Aorta (tissue), 5 donors: ENCODE measurements at regions of chr2 and their contacts with region 1.

Region 1: GRCh38 chr2:130332271-130333073 is 10.2 kb upstream of the IMP4 start:
- DNase-seq: peak; percentile 74 to 92
- ATAC-seq: peak; percentile 80
- H3K4me3 ChIP-seq: no peak overlapping the region
- H3K27ac ChIP-seq: no peak overlapping the region
- H3K4me1 ChIP-seq: no peaks in the 10 kb centered on the region
- H3K27me3 ChIP-seq: no peaks in the 10 kb centered on the region

Region 2: DNA sequence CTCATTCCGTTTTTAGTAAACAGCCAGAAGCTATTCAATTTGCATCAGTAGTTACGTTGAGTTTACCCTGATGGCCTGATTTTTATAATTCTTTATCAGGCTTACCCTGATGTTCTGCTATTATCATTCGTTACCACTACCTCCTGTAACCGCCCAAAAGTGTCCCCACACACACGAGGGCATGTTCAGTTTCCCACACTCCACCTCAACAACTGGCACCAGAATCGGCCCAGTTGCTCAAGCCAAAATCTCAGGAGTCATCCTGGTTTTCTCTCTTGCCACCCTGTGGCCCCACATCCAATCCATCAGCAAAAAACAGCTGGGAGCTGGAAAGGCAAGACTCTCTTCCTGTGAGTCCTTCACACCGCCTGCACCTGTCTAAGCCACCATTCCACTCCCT is 455.9 kb before region 1 on chr2:
- intact Hi-C with region 1: no loop called
- DNase-seq: no peak
- ATAC-seq: no peak
- H3K4me3 ChIP-seq: peak overlapping the region in 1 of 2 donors; percentile 30
- H3K27ac ChIP-seq: no peak overlapping the region
- H3K4me1 ChIP-seq: no peaks in the 10 kb centered on the region
- H3K27me3 ChIP-seq: no peaks in the 10 kb centered on the region

Region 3: GRCh38 chr2:129936334-129936934 is 396.0 kb before region 1 on chr2:
- intact Hi-C with region 1: loop called in 1 of 2 experiments (anchors 5 kb)
- DNase-seq: no peak
- ATAC-seq: no peak
- H3K4me3 ChIP-seq: no peak overlapping the region
- H3K27ac ChIP-seq: no peak overlapping the region
- H3K4me1 ChIP-seq: no peaks in the 10 kb centered on the region
- H3K27me3 ChIP-seq: no peaks in the 10 kb centered on the region

Region 4: GRCh38 chr2:130181325-130181879 is 151.1 kb before region 1 on chr2 and contains the start of gene SMPD4:
- intact Hi-C with region 1: loop called (anchors 5 kb)
- DNase-seq: peak; percentile 99 to 100
- ATAC-seq: peak; percentile 98
- H3K4me3 ChIP-seq: peak within 1 kb of the TSS; percentile 77 to 92
- H3K27ac ChIP-seq: peak within 1 kb of the TSS; percentile 22 to 57
- H3K4me1 ChIP-seq: no peaks in the 10 kb centered on the region
- H3K27me3 ChIP-seq: no peaks in the 10 kb centered on the region
- total RNA-seq, gene SMPD4: 32.3 to 37.4 TPM

Region 5: GRCh38 chr2:131016826-131017741 is 684.6 kb after region 1 on chr2:
- intact Hi-C with region 1: no loop called
- DNase-seq: no peak
- ATAC-seq: no peak
- H3K4me3 ChIP-seq: no peak overlapping the region
- H3K27ac ChIP-seq: no peak overlapping the region
- H3K4me1 ChIP-seq: no peaks in the 10 kb centered on the region
- H3K27me3 ChIP-seq: no peaks in the 10 kb centered on the region